ENCODE measurements at regions of chr1 and their contacts with region 1.

Region 1: GRCh38 chr1:203609979-203610493 is 16.6 kb upstream of the ATP2B4 start:
- DNase-seq: no peak
- H3K4me3 Mint-ChIP-seq: no peak overlapping the region
- H3K27ac Mint-ChIP-seq: peak overlapping the region; percentile 41
- H3K4me1 Mint-ChIP-seq: peaks cover 57% of the 10 kb centered on the region
- H3K27me3 Mint-ChIP-seq: peaks cover 2% of the 10 kb centered on the region

Region 2: DNA sequence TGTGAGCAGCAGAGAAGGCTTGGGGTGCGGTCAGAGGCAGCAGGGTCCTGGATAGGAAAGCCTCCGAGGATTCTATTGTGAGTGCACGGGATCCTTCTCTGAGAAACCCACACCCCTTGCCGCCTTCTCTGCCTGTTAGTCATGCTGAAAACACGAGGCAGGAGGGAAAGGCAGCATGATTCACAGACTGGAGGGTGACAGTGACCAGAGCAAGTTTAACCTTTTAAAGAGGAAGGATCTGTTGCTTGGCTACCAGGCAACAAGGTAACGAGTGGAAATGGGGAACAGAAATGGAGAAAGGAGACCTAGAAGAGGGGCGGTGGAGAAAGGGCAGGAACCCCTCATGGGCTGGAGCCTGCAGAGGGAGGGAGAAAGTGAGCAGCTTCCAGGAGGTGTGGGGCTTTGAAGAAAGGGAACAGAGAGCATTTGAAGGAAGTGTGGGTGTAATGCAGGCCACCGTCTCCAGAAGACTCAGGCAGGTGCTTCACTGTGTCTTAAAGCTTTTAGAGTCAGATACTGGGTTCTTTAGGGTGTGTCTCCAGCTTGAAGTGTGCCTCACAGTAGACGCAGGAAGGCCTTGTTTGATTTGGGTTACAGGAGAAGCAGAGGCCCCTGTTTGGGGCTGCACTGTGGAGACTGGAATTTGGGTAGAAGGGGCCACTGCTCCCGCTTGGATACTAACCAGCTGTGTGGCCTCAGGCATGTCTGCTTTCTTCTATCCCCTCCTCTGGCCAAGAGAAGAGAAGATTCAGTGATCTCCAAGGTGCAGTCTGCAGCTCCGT is 97.0 kb before region 1 on chr1:
- intact Hi-C with region 1: loop called (anchors 2 kb)
- DNase-seq: peak; percentile 71
- H3K4me3 Mint-ChIP-seq: peak overlapping the region; percentile 68
- H3K27ac Mint-ChIP-seq: peak overlapping the region; percentile 96
- H3K4me1 Mint-ChIP-seq: peaks cover 30% of the 10 kb centered on the region
- H3K27me3 Mint-ChIP-seq: peaks cover 2% of the 10 kb centered on the region

Region 3: DNA sequence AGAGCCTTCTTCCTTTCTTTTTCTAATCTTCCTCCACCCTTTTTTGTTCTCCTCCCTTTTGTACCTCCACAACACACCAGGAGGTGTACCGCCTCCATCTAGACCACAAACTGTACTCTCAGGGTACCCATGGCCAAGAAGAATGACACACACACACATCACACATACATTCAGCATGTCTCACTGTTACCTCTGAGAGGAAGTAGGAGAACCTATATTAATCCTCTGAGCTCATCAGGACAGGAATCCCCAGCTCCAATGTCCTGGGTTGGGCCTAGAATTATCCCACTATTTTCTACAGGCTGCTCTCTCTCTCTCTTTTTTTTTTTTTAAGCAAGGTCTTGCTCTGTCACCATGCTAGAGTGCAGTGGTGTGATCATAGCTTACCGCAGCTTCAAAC is 53.3 kb after region 1 on chr1:
- intact Hi-C with region 1: loop called (anchors 2 kb)
- DNase-seq: peak; percentile 68
- H3K4me3 Mint-ChIP-seq: peak overlapping the region; percentile 29
- H3K27ac Mint-ChIP-seq: peak overlapping the region; percentile 69
- H3K4me1 Mint-ChIP-seq: peaks cover 54% of the 10 kb centered on the region
- H3K27me3 Mint-ChIP-seq: no peaks in the 10 kb centered on the region

Region 4: GRCh38 chr1:203682473-203683383 is 72.7 kb after region 1 on chr1:
- intact Hi-C with region 1: loop called (anchors 1 kb)
- DNase-seq: peak; percentile 94
- H3K4me3 Mint-ChIP-seq: peak overlapping the region; percentile 70
- H3K27ac Mint-ChIP-seq: peak overlapping the region; percentile 92
- H3K4me1 Mint-ChIP-seq: peaks cover 31% of the 10 kb centered on the region
- H3K27me3 Mint-ChIP-seq: no peaks in the 10 kb centered on the region

Region 5: DNA sequence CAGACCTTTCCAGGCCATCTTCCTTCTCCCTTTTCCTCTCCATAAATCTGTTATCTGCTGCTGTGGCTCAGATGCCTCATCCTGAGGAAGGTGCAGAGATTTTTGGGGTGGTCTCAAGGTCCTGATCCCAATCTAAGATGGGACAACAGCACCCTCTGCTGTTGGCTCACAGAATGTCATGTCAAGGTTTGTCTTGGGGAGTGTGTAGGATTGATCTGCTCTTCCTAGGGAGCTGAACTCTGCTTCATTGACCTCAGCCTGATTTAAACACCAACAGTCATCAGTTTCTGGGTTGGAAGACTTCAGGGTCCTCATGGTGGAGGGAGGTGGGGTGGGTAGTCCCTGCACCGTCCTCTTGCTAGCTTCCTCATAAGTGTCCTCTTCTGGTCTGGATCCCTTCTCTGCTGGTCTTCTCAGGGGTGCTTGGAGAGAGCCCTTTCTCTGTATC is 92.1 kb after region 1 on chr1:
- intact Hi-C with region 1: loop called (anchors 5 kb)
- DNase-seq: peak; percentile 88
- H3K4me3 Mint-ChIP-seq: no peak overlapping the region
- H3K27ac Mint-ChIP-seq: peak overlapping the region; percentile 76
- H3K4me1 Mint-ChIP-seq: peaks cover 14% of the 10 kb centered on the region
- H3K27me3 Mint-ChIP-seq: no peaks in the 10 kb centered on the region

Measured in activated CD4-positive, alpha-beta T cell treated with anti-CD3 and anti-CD28 coated beads, Interleukin-2, amount 10 ng/mL, durations not matched to agents 24 days and 14 days (primary cell).